ENCODE measurements at regions of chr1 and their contacts with region 1.

Region 1: DNA sequence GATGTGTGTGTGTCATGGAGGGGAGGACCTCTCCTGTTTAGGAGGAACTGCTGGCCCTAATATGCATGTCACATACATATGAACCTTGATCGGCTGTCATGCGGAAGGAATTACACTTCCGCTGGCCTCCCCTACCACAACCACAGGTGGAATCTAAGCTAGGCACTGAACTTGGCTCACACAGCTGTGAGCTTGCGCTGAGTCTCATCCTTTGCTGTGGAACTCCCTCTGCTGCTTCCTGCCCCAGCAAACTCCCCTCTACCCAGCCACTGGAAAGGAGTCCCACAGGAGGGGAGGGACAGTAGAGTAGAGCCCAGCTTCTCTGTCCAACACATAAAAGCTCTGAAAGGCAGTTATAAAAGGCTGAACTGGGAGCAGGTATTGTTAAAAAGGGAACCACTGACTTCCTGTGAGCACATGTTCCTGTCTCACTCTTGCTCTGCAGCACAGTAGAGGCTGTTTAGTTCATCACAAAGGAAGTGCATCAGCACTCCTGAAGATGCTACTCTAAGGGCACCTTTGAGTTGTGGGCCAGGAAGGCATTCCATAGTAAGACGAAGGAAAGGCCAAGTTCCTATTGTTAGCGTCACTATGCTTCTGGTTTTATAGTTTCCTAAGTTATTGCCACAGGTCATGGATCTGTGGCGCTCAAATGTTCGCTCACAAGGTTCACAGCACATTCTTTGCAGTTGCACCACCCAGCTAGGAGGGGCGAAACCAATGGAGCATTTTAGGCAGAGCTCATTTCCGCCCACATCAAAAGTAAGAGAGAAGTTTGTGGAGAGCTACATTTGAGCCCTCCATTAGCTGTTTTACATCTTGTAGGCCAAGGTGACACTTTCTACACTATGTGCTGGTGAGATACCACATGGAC is 17.7 kb upstream of the PTPRC start:
- DNase-seq: peak; percentile 25 to 82 (median 76)
- ATAC-seq: peak; percentile 87
- H3K4me3 ChIP-seq: peak overlapping the region; percentile 48
- H3K4me3 Mint-ChIP-seq: peak overlapping the region; percentile 65 to 91 (median 84)
- H3K27ac ChIP-seq: peak overlapping the region; percentile 67
- H3K27ac Mint-ChIP-seq: peak overlapping the region; percentile 89 to 99 (median 96)
- H3K4me1 ChIP-seq: peaks cover 73 to 93% of the 10 kb centered on the region in 2 donors
- H3K4me1 Mint-ChIP-seq: peaks cover 58 to 98% (median 85%) of the 10 kb centered on the region in 7 donors
- H3K27me3 ChIP-seq: no peaks in the 10 kb centered on the region
- H3K27me3 Mint-ChIP-seq: no peaks in the 10 kb centered on the region

Region 2: GRCh38 chr1:198497346-198498102 is 123.7 kb before region 1 on chr1:
- CTCF ChIA-PET with region 1: no interaction called
- POLR2A ChIA-PET with region 1: no interaction called
- intact Hi-C with region 1: no loop called
- DNase-seq: no peak
- ATAC-seq: no peak
- H3K4me3 ChIP-seq: no peak overlapping the region
- H3K4me3 Mint-ChIP-seq: no peak overlapping the region
- H3K27ac ChIP-seq: no peak overlapping the region
- H3K27ac Mint-ChIP-seq: no peak overlapping the region
- H3K4me1 ChIP-seq: no peaks in the 10 kb centered on the region
- H3K4me1 Mint-ChIP-seq: peaks cover 0 to 10% (median 0%) of the 10 kb centered on the region in 7 donors
- H3K27me3 ChIP-seq: no peaks in the 10 kb centered on the region
- H3K27me3 Mint-ChIP-seq: no peaks in the 10 kb centered on the region

Region 3: DNA sequence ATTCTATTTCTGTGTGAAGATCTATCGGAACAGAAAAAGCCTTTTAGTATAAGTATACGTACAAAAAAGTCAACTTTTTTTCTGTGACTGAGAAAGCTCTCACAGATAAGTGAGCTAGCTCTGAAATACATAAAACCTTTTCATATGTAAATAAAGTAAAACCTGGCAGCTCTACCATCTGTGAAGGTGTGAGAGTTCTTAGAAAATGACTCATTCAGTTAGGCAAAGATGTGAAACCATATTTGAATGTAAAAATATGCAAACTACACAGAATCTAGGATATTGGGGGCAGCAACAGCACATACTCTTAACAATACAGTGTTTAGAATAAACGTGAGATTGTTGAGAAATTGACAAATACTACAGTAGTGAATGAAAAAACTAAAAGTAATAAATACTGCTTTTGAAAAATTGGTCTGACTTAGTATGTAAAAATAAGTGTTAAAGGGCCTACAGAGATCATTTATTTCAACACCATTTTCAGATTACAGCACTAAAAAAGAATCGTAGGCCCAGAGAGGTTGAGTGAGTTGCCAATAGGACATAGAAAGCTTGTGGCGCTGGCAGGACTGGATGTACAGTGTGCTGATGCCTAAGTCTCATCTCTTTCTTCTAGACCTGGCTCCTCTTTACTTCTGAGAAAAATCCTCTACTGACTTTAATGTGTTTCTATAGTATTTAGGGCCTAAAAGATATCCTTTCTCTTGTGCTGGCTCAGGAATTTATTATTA is 100.5 kb before region 1 on chr1:
- CTCF ChIA-PET with region 1: interaction called, 12 read pairs
- POLR2A ChIA-PET with region 1: interaction called, 126 read pairs
- intact Hi-C with region 1: loop called in 1 of 2 experiments (anchors 1 kb)
- DNase-seq: peak in 3 of 9 donors; percentile 11 to 27 (median 18)
- ATAC-seq: peak; percentile 66
- H3K4me3 ChIP-seq: peak overlapping the region; percentile 44
- H3K4me3 Mint-ChIP-seq: peak overlapping the region; percentile 65 to 79 (median 71)
- H3K27ac ChIP-seq: peak overlapping the region; percentile 81
- H3K27ac Mint-ChIP-seq: peak overlapping the region; percentile 48 to 95 (median 93)
- H3K4me1 ChIP-seq: peaks cover 40 to 48% of the 10 kb centered on the region in 2 donors
- H3K4me1 Mint-ChIP-seq: peaks cover 30 to 77% (median 69%) of the 10 kb centered on the region in 7 donors
- H3K27me3 ChIP-seq: no peaks in the 10 kb centered on the region
- H3K27me3 Mint-ChIP-seq: no peaks in the 10 kb centered on the region

Region 4: GRCh38 chr1:198556971-198557370 is 64.2 kb before region 1 on chr1:
- CTCF ChIA-PET with region 1: interaction called, 5 read pairs
- POLR2A ChIA-PET with region 1: interaction called, 13 read pairs
- intact Hi-C with region 1: loop called (anchors 1 to 2 kb)
- DNase-seq: peak; percentile 12 to 90 (median 82)
- ATAC-seq: peak; percentile 95
- H3K4me3 ChIP-seq: peak overlapping the region; percentile 21
- H3K4me3 Mint-ChIP-seq: peak overlapping the region; percentile 63 to 89 (median 74)
- H3K27ac ChIP-seq: peak overlapping the region; percentile 59
- H3K27ac Mint-ChIP-seq: peak overlapping the region; percentile 51 to 95 (median 87)
- H3K4me1 ChIP-seq: peaks cover 65 to 71% of the 10 kb centered on the region in 2 donors
- H3K4me1 Mint-ChIP-seq: peaks cover 52 to 94% (median 89%) of the 10 kb centered on the region in 7 donors
- H3K27me3 ChIP-seq: no peaks in the 10 kb centered on the region
- H3K27me3 Mint-ChIP-seq: no peaks in the 10 kb centered on the region

Region 5: GRCh38 chr1:198633675-198634121 is 12.5 kb after region 1 on chr1:
- CTCF ChIA-PET with region 1: interaction called, 88 read pairs
- POLR2A ChIA-PET with region 1: interaction called, 332 read pairs
- intact Hi-C with region 1: loop called in 1 of 2 experiments (anchors 1 kb)
- DNase-seq: no peak
- ATAC-seq: peak; percentile 68
- H3K4me3 ChIP-seq: peak overlapping the region; percentile 3
- H3K4me3 Mint-ChIP-seq: peak overlapping the region in 9 of 10 donors; percentile 15 to 83 (median 43)
- H3K27ac ChIP-seq: no peak overlapping the region
- H3K27ac Mint-ChIP-seq: peak overlapping the region; percentile 60 to 98 (median 85)
- H3K4me1 ChIP-seq: peaks cover 70 to 86% of the 10 kb centered on the region in 2 donors
- H3K4me1 Mint-ChIP-seq: peaks cover 64 to 95% (median 84%) of the 10 kb centered on the region in 7 donors
- H3K27me3 ChIP-seq: no peaks in the 10 kb centered on the region
- H3K27me3 Mint-ChIP-seq: no peaks in the 10 kb centered on the region

Region 6: GRCh38 chr1:198657550-198658064 is 36.4 kb after region 1 on chr1:
- CTCF ChIA-PET with region 1: no interaction called
- POLR2A ChIA-PET with region 1: interaction called, 54 read pairs
- intact Hi-C with region 1: loop called (anchors 1 to 5 kb)
- DNase-seq: peak in 6 of 9 donors; percentile 59 to 83 (median 70)
- ATAC-seq: peak; percentile 65
- H3K4me3 ChIP-seq: peak overlapping the region; percentile 40
- H3K4me3 Mint-ChIP-seq: peak overlapping the region; percentile 49 to 87 (median 82)
- H3K27ac ChIP-seq: peak overlapping the region; percentile 94
- H3K27ac Mint-ChIP-seq: peak overlapping the region; percentile 90 to 99 (median 97)
- H3K4me1 ChIP-seq: peaks cover 65 to 78% of the 10 kb centered on the region in 2 donors
- H3K4me1 Mint-ChIP-seq: peaks cover 36 to 90% (median 73%) of the 10 kb centered on the region in 7 donors
- H3K27me3 ChIP-seq: no peaks in the 10 kb centered on the region
- H3K27me3 Mint-ChIP-seq: no peaks in the 10 kb centered on the region

Region 7: DNA sequence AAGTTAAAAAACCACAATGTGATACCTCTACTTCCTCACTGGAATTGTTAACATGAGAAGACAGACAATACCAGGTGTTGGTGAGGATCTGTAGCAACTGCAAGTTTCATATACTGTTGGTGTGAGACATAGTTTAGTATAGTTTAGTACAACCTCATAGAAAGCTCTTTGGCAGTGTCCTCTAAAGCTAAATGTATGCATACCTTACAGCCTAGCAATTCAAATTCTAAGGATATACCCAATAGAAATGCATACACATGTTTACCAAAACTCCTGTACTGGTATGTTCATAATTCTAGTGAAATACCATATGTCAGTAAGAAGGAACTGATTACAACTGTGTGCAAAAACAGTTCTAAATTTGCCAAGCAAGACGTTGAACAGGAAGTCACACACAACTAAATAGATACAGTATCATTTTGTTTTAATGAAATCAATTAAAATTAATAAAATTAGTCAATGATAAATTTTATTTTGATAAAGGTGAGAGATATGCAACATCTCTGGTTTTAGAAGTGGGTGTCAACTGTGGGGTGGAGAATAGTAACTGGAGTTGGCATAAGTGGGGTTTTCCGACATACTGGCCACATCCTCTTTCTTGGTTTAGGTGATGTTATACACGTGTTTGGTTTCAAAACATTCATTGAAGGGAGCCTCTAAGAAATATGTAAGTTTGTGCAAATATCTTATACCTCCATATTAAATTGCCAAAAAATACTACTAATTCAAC is 468.4 kb after region 1 on chr1:
- CTCF ChIA-PET with region 1: no interaction called
- POLR2A ChIA-PET with region 1: no interaction called
- intact Hi-C with region 1: loop called in 1 of 2 experiments (anchors 10 kb)
- DNase-seq: peak in 8 of 9 donors; percentile 25 to 72 (median 48)
- ATAC-seq: peak; percentile 99
- H3K4me3 ChIP-seq: no peak overlapping the region
- H3K4me3 Mint-ChIP-seq: peak overlapping the region in 8 of 10 donors; percentile 7 to 53 (median 48)
- H3K27ac ChIP-seq: no peak overlapping the region
- H3K27ac Mint-ChIP-seq: peak overlapping the region in 2 of 9 donors; percentile 20 to 80
- H3K4me1 ChIP-seq: peaks cover 10 to 21% of the 10 kb centered on the region in 2 donors
- H3K4me1 Mint-ChIP-seq: peaks cover 4 to 43% (median 19%) of the 10 kb centered on the region in 7 donors
- H3K27me3 ChIP-seq: no peaks in the 10 kb centered on the region
- H3K27me3 Mint-ChIP-seq: peaks cover 0 to 4% (median 0%) of the 10 kb centered on the region in 5 donors

Region 8: GRCh38 chr1:199725002-199725565 is 1103.9 kb after region 1 on chr1:
- CTCF ChIA-PET with region 1: no interaction called
- POLR2A ChIA-PET with region 1: no interaction called
- intact Hi-C with region 1: no loop called
- DNase-seq: no peak
- ATAC-seq: no peak
- H3K4me3 ChIP-seq: no peak overlapping the region
- H3K4me3 Mint-ChIP-seq: no peak overlapping the region
- H3K27ac ChIP-seq: no peak overlapping the region
- H3K27ac Mint-ChIP-seq: no peak overlapping the region
- H3K4me1 ChIP-seq: no peaks in the 10 kb centered on the region
- H3K4me1 Mint-ChIP-seq: peaks cover 0 to 5% (median 0%) of the 10 kb centered on the region in 7 donors
- H3K27me3 ChIP-seq: no peaks in the 10 kb centered on the region
- H3K27me3 Mint-ChIP-seq: peaks cover 5 to 23% (median 16%) of the 10 kb centered on the region in 5 donors